H1 (cell line): ENCODE measurements at regions of chr20 and their contacts with region 1.

Region 1: GRCh38 chr20:3716195-3716834 is 3.9 kb upstream of the SIGLEC1 start:
- DNase-seq: peak; percentile 25 to 72
- H3K4me3 ChIP-seq: no peak overlapping the region
- H3K27ac ChIP-seq: no peak overlapping the region
- H3K4me1 ChIP-seq: no peaks in the 10 kb centered on the region
- H3K27me3 ChIP-seq: no peaks in the 10 kb centered on the region
- CTCF ChIP-seq: peak; percentile 91 to 96 (median 96)
- EP300 ChIP-seq: no peak
- POLR2A ChIP-seq: no peak
- RAD21 ChIP-seq: peak; percentile 90 to 97

Region 2: GRCh38 chr20:3539311-3540107 is 176.8 kb before region 1 on chr20:
- CTCF ChIA-PET with region 1: no interaction called
- POLR2A ChIA-PET with region 1: no interaction called
- DNase-seq: no peak
- H3K4me3 ChIP-seq: no peak overlapping the region
- H3K27ac ChIP-seq: no peak overlapping the region
- H3K4me1 ChIP-seq: no peaks in the 10 kb centered on the region
- H3K27me3 ChIP-seq: no peaks in the 10 kb centered on the region
- CTCF ChIP-seq: no peak
- EP300 ChIP-seq: no peak
- POLR2A ChIP-seq: no peak
- RAD21 ChIP-seq: no peak

Region 3: DNA sequence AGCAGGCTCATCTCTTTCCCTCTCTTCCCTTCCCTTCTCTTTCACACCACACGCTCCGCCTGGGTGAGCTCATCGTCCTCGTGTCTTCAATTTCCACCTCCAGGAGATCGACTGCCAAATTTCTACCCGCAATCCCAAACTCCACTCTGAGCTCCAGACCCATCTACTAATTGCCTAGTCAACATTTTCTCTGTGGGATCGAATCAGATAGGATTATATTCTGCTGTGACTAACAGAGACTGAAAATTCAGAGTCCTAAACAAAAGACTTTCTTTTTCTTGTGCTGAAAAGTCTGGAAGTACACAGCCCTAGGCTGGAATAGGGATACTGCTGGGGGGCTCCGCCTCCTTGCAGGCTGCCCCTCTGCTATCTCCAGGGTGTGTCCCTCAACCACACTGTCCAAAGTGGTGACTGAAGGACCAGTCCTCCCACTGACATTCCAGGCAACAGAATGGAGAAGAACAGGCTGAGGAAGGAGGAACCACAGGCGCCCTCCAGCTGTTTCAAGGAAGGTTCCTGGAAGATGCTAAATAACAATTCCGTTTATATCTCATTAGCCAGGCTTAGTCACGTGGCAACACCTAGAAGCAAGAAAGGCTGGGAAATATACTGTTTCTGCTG is 11.2 kb after region 1 on chr20:
- CTCF ChIA-PET with region 1: interaction called, 37 read pairs
- POLR2A ChIA-PET with region 1: interaction called, 7 read pairs
- DNase-seq: no peak
- H3K4me3 ChIP-seq: no peak overlapping the region
- H3K27ac ChIP-seq: no peak overlapping the region
- H3K4me1 ChIP-seq: peaks cover 0 to 6% (median 2%) of the 10 kb centered on the region in 4 experiments; a peak in 3 of 7 replicates
- H3K27me3 ChIP-seq: peaks cover 1 to 18% (median 13%) of the 10 kb centered on the region in 4 experiments; a peak in 4 of 7 replicates
- CTCF ChIP-seq: no peak
- EP300 ChIP-seq: no peak
- POLR2A ChIP-seq: no peak
- RAD21 ChIP-seq: no peak

Region 4: GRCh38 chr20:3732327-3733118 is 16.2 kb after region 1 on chr20 and contains the start of gene HSPA12B:
- CTCF ChIA-PET with region 1: interaction called, 37 read pairs
- POLR2A ChIA-PET with region 1: interaction called, 7 read pairs
- DNase-seq: peak in 1 of 2 experiments; percentile 72
- H3K4me3 ChIP-seq: peak within 1 kb of the TSS; percentile 33 to 59 (median 41)
- H3K27ac ChIP-seq: no peak within 1 kb of the TSS
- H3K4me1 ChIP-seq: peaks cover 0 to 19% (median 15%) of the 10 kb centered on the region in 4 experiments; a peak in 5 of 7 replicates
- H3K27me3 ChIP-seq: peaks cover 1 to 26% (median 22%) of the 10 kb centered on the region in 4 experiments; a peak in 6 of 7 replicates
- CTCF ChIP-seq: no peak
- EP300 ChIP-seq: no peak
- POLR2A ChIP-seq: no peak
- RAD21 ChIP-seq: no peak
- total RNA-seq, gene HSPA12B: 4.3 and 4.9 TPM in 2 replicates

Region 5: DNA sequence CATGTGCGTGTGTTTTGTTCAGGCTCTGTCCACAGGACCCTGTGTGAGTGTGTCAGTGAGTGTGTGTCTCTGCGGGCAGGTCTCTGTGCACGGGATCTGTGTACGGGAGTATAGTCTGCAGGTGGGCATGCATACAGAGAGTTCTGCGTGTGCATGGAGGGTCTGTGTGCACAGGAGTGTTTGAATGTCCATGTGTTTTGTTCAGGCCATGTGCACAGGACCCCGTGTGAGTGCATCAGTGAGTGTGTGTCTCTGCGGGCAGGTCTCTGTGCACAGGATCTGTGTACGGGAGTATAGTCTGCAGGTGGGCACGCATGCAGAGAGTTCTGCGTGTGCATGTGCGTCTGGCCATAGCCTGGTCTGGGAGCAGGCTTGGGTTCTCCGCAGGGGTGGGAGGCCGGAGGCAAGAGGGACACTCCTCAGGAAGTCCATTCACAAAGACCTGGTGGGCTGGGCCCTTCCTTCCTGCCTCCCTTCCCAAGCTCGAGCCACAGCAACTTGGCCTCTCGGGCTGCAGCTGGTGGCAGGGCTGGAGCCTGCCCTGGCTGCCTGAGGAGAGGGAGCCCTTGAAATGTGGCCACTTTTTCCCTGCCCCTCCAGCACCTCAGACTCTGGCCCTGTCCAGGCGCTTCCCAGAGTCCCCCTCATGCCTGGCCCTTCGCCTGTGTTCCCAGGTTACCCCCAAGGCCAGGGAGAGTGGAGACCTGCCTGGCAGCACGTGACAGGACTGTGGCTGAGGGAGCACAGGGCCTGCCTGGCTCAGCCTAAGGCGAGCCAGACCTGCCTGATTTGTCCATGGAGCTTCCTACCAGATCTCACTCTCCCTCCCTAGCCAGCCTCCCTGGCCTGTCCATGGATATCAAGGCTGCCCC is 23.0 kb after region 1 on chr20:
- CTCF ChIA-PET with region 1: interaction called, 308 read pairs
- POLR2A ChIA-PET with region 1: no interaction called
- DNase-seq: no peak
- H3K4me3 ChIP-seq: no peak overlapping the region
- H3K27ac ChIP-seq: no peak overlapping the region
- H3K4me1 ChIP-seq: peaks cover 0 to 19% (median 9%) of the 10 kb centered on the region in 4 experiments; a peak in 6 of 7 replicates
- H3K27me3 ChIP-seq: peaks cover 0 to 4% (median 0%) of the 10 kb centered on the region in 4 experiments; a peak in 2 of 7 replicates
- CTCF ChIP-seq: no peak
- EP300 ChIP-seq: no peak
- POLR2A ChIP-seq: no peak
- RAD21 ChIP-seq: no peak

Region 6: GRCh38 chr20:3781153-3781910 is 65.0 kb after region 1 on chr20 and contains the start of gene SPEF1:
- CTCF ChIA-PET with region 1: interaction called, 10 read pairs
- POLR2A ChIA-PET with region 1: no interaction called
- DNase-seq: peak; percentile 81 to 84
- H3K4me3 ChIP-seq: peak within 1 kb of the TSS; percentile 6 to 53 (median 43); a peak in 7 of 8 replicates
- H3K27ac ChIP-seq: no peak within 1 kb of the TSS
- H3K4me1 ChIP-seq: peaks cover 0 to 23% (median 15%) of the 10 kb centered on the region in 4 experiments; a peak in 6 of 7 replicates
- H3K27me3 ChIP-seq: peaks cover 0 to 30% (median 26%) of the 10 kb centered on the region in 4 experiments; a peak in 6 of 7 replicates
- CTCF ChIP-seq: peak; percentile 41 to 71 (median 59); a peak in 3 of 4 replicates
- EP300 ChIP-seq: no peak
- POLR2A ChIP-seq: no peak
- RAD21 ChIP-seq: peak; percentile 38 to 39
- total RNA-seq, gene SPEF1: 0.65 and 0.71 TPM in 2 replicates

Region 7: DNA sequence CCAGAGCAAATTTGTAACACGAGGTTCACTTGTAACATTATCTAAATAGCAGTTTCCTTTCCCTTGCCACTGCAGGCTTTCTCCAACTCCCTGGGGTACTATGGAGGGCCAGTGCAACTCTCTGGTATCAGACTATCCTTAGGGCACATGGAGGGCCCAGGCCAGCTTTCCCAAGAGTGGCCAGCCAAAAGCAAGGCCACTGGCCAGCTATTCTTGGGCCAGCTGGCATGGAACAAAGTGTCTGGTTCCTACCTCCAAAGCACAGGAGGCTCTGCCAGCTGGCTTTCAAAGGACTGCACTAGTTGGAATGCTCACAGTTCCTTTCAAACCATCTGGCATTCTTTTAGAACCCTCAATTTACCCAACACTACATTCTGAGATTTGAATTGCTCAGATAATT is 290.3 kb after region 1 on chr20:
- CTCF ChIA-PET with region 1: no interaction called
- POLR2A ChIA-PET with region 1: no interaction called
- DNase-seq: no peak
- H3K4me3 ChIP-seq: no peak overlapping the region
- H3K27ac ChIP-seq: no peak overlapping the region
- H3K4me1 ChIP-seq: peaks cover 0 to 3% (median 0%) of the 10 kb centered on the region in 4 experiments; a peak in 1 of 7 replicates
- H3K27me3 ChIP-seq: no peaks in the 10 kb centered on the region
- CTCF ChIP-seq: no peak
- EP300 ChIP-seq: no peak
- POLR2A ChIP-seq: no peak
- RAD21 ChIP-seq: no peak